Ascending aorta (tissue), 2 donors: ENCODE measurements at regions of chr17 and their contacts with region 1.

Region 1: GRCh38 chr17:32877164-32877764 is 340 bp upstream of the MYO1D start:
- DNase-seq: peak; percentile 50 to 96
- H3K4me3 ChIP-seq: peak overlapping the region; percentile 85 to 93
- H3K27ac ChIP-seq: peak overlapping the region; percentile 96 to 98
- H3K4me1 ChIP-seq: peaks cover 4 to 19% of the 10 kb centered on the region in 2 donors
- H3K27me3 ChIP-seq: no peaks in the 10 kb centered on the region
- CTCF ChIP-seq: peak; percentile 73 to 100 (median 79)

Region 2: GRCh38 chr17:32495359-32496231 is 381.7 kb before region 1 on chr17:
- intact Hi-C with region 1: loop called (anchors 5 kb)
- DNase-seq: no peak
- H3K4me3 ChIP-seq: peak overlapping the region in 1 of 2 donors; percentile 32
- H3K27ac ChIP-seq: peak overlapping the region; percentile 67 to 92
- H3K4me1 ChIP-seq: peaks cover 20 to 33% of the 10 kb centered on the region in 2 donors
- H3K27me3 ChIP-seq: no peaks in the 10 kb centered on the region
- CTCF ChIP-seq: no peak

Region 3: DNA sequence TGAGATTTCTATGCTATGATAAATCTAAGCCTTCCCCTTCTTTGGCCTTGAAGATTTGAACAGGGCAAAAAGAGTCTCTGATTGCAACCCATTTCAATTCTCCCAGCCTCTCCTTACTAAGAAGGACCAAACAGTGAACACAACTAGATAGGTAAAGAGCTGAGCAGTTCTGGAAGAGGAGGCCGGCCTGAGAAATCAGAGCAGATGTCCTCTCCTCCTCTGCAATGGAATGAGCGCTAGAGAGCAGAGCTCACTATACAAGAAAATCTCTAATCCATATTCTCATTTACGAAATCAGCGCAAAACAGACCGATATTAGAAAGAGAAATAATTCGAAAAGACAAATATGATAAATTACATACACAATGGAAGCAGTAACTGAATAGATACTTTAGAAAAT is 266.3 kb before region 1 on chr17:
- intact Hi-C with region 1: no loop called
- DNase-seq: no peak
- H3K4me3 ChIP-seq: no peak overlapping the region
- H3K27ac ChIP-seq: no peak overlapping the region
- H3K4me1 ChIP-seq: no peaks in the 10 kb centered on the region
- H3K27me3 ChIP-seq: no peaks in the 10 kb centered on the region
- CTCF ChIP-seq: no peak

Region 4: DNA sequence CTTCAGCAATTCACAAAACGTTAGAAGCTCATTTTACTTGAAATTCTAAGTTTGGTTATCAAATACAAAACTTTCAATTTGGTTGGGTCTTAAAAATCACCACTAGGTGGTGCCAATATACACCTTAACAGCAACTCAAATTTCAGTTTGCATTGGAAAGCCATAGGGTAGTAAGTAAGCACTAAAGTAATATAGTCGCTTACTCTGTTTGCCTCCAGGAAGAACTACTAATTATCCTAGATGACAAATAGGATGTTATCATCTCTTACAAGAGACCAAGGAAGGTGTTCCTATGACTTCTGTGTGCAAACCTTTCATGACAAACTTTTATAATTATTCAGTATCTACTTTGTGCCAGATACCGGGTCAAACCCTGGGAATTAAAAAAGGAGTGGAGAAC is 93.7 kb before region 1 on chr17:
- intact Hi-C with region 1: loop called (anchors 1 kb)
- DNase-seq: no peak
- H3K4me3 ChIP-seq: no peak overlapping the region
- H3K27ac ChIP-seq: peak overlapping the region; percentile 27 to 35
- H3K4me1 ChIP-seq: peaks cover 0 to 7% of the 10 kb centered on the region in 2 donors
- H3K27me3 ChIP-seq: no peaks in the 10 kb centered on the region
- CTCF ChIP-seq: peak; percentile 65 to 73 (median 67)

Region 5: GRCh38 chr17:32909787-32910369 is 32.6 kb after region 1 on chr17:
- intact Hi-C with region 1: loop called (anchors 1 kb)
- DNase-seq: peak in 1 of 2 donors; percentile 93
- H3K4me3 ChIP-seq: no peak overlapping the region
- H3K27ac ChIP-seq: peak overlapping the region in 1 of 2 donors; percentile 13
- H3K4me1 ChIP-seq: peaks cover 0 to 12% of the 10 kb centered on the region in 2 donors
- H3K27me3 ChIP-seq: no peaks in the 10 kb centered on the region
- CTCF ChIP-seq: peak; percentile 66 to 86 (median 79)

Region 6: GRCh38 chr17:34098699-34099098 is 1221.4 kb after region 1 on chr17:
- intact Hi-C with region 1: no loop called
- DNase-seq: no peak
- H3K4me3 ChIP-seq: no peak overlapping the region
- H3K27ac ChIP-seq: no peak overlapping the region
- H3K4me1 ChIP-seq: no peaks in the 10 kb centered on the region
- H3K27me3 ChIP-seq: no peaks in the 10 kb centered on the region
- CTCF ChIP-seq: no peak